Right ventricle myocardium inferior (tissue), 1 donor: ENCODE measurements at regions of chr5 and their contacts with region 1.

Region 1: GRCh38 chr5:137498736-137499505 is at the start of gene SPOCK1:
- DNase-seq: peak; percentile 88
- ATAC-seq: peak; percentile 94
- total RNA-seq, gene SPOCK1: 35.5 TPM

Region 2: DNA sequence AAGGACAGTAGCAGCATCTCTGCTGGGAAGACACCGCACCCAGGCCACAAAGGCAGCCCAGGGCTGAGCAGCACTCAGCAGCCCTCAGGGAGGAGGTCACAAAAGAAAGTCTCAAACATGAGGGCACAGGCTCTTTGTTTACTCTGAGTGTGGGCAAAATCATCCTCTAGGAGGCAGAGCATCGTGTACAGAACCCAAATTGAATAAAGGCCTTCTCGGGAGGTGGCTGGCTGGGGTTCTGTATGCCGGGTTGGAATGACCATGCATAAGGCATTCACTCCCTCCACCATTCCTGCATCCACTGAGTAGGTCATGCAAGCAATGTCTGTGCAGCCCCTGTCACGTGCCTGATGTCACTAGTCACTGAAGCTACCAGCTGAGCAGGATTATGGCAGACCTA is 412.6 kb before region 1 on chr5:
- intact Hi-C with region 1: no loop called
- DNase-seq: no peak
- ATAC-seq: no peak

Region 3: GRCh38 chr5:137206030-137206715 is 292.7 kb before region 1 on chr5:
- intact Hi-C with region 1: no loop called
- DNase-seq: no peak
- ATAC-seq: no peak

Region 4: DNA sequence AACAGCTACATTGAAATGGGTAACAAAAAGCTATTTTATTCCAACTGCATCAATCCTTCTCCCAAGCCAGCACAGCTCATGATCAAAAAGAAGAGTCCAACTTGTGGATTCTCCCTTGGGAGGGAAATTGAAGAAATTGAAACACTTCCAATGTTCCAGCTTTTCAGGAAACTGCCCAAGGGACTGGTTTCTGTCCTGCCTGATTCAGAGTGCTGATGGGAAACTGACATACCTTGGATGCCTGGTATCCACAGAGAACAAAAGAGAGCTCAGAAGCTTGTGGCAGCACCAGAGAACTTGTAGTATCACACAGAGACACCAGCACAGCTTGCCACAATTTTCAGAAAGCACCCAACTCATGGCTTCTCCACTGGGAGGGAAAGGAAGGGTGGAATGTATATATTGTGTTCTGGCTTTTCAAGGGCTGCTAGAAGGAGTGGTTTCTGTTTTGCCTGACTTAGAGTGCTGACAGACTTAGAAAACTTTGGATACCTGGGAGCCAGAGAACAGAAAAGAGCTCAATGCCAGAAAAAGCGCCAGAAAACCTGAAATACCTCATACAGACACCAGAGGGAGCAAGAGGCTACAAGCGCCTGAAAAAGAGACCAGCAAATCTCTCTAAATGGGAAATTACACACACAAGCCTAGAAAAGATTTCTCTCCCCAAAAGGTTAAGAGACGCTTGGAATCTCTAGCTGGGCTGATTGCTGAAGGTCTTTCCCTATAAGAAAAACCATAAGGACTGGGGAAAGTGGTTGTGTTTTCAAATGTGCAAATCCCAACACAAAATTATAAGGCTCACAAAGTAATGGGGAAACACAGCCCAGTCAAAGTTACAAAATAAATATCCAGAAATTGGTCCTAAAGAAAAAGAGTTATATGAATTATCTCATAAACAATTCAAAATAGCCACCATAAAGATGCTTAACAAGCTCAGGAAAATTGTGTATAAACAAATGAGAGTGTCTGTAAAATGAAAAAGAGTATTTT is 178.6 kb before region 1 on chr5:
- intact Hi-C with region 1: loop called (anchors 1 kb)
- DNase-seq: no peak
- ATAC-seq: peak; percentile 45

Region 5: GRCh38 chr5:137342764-137343163 is 156.2 kb before region 1 on chr5:
- intact Hi-C with region 1: no loop called
- DNase-seq: no peak
- ATAC-seq: no peak